CD8-positive, alpha-beta T cell (primary cell): ENCODE measurements at regions of chr19 and their contacts with region 1.

Region 1: DNA sequence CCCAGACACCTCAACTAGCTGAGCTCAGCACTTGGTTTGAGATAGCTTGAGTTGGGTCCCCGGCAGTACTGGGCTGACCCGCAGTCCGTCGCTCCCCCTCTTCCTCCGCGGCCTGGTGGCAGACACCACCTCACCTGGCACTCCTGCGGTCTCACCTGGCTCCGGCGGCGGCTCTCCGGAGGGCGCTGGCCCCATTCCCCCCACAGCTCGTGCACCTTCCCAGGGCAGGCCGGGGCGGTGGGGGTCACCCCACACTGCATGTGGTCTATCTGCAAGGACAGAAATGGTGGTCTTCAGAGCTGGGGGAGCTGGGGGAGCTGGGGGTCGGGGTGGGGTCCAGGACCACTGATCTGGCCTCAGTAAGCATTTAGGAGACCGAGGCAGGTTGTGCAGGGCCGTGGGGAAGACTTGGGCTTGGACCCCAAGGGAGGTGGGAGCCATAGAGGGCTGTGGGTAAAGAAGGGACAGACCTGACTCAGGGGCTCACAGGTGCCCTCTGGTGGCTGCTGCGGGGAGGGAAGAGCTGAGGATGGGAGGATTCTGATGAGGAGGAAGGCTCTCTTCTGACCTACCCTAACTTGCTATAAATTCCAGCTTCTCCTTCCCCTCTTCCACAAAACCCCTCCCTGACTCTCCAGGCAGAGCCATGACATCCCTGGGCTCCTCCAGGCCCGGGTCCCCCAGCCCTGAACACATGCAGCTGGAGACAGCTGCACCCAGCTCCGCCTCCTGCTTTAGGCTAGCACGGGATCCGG is 6.7 kb upstream of the PLIN4 start:
- DNase-seq: peak; percentile 41 to 75 (median 58)
- ATAC-seq: peak; percentile 77
- H3K4me3 ChIP-seq: no peak overlapping the region
- H3K4me3 Mint-ChIP-seq: no peak overlapping the region
- H3K27ac ChIP-seq: no peak overlapping the region
- H3K27ac Mint-ChIP-seq: no peak overlapping the region
- H3K4me1 ChIP-seq: no peaks in the 10 kb centered on the region
- H3K4me1 Mint-ChIP-seq: no peaks in the 10 kb centered on the region
- H3K27me3 ChIP-seq: peaks cover 0 to 2% of the 10 kb centered on the region in 2 experiments
- H3K27me3 Mint-ChIP-seq: peaks cover 3% of the 10 kb centered on the region
- CTCF ChIP-seq: peak; percentile 46

Region 2: DNA sequence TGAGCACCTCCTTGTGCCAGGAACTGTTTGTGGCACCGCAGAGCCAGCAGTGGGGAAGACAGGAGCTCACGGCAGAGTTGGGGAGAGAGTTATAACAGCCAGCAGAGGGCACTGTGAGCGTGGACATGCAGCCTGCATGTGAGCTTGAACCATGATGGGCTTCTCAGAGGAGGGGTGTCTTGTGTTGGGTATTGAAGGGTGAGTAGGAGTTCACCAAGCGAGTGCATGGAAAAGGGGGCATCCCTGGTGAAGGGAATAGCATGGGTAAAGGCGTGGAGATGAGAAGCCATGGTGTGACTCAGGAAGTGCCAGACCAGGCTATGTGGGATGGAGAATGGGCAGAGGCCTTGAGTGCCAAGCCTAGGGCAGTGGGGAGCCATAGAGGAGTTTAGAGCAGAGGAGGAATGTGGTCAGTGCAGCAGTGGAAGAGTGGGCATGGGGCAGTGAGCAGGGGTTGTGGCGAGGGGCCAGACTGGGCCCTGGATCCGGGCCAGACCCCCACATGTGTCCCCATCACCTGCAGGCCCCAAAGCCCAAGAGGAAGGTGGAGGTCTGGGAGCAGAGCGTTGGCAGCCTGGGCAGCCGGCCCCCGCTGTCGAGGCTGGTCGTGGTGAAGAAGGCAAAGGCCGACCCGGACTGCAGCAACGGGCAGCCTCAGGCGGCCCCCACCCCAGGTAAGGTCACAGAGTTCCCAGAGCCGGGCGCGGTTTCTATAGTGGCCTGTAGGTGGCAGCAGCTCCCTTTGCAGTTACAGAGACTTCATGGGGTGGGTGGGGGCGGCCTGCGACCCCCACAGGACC is 257.7 kb before region 1 on chr19:
- CTCF ChIA-PET with region 1: interaction called, 23 read pairs
- POLR2A ChIA-PET with region 1: no interaction called
- intact Hi-C with region 1: loop called in 1 of 2 experiments (anchors 2 kb)
- DNase-seq: peak; percentile 37 to 76 (median 65)
- ATAC-seq: peak; percentile 70
- H3K4me3 ChIP-seq: no peak overlapping the region
- H3K4me3 Mint-ChIP-seq: no peak overlapping the region
- H3K27ac ChIP-seq: no peak overlapping the region
- H3K27ac Mint-ChIP-seq: peak overlapping the region; percentile 23
- H3K4me1 ChIP-seq: peaks cover 15% of the 10 kb centered on the region
- H3K4me1 Mint-ChIP-seq: peaks cover 25% of the 10 kb centered on the region
- H3K27me3 ChIP-seq: no peaks in the 10 kb centered on the region
- H3K27me3 Mint-ChIP-seq: no peaks in the 10 kb centered on the region
- CTCF ChIP-seq: peak; percentile 82

Region 3: GRCh38 chr19:4534836-4535658 is 10.1 kb after region 1 on chr19 and contains the start of gene PLIN5:
- CTCF ChIA-PET with region 1: interaction called, 27 read pairs
- POLR2A ChIA-PET with region 1: no interaction called
- intact Hi-C with region 1: no loop called
- DNase-seq: peak; percentile 15 to 63 (median 50)
- ATAC-seq: peak; percentile 78
- H3K4me3 ChIP-seq: peak within 1 kb of the TSS in 1 of 2 experiments; percentile 3
- H3K4me3 Mint-ChIP-seq: peak within 1 kb of the TSS; percentile 43
- H3K27ac ChIP-seq: no peak within 1 kb of the TSS
- H3K27ac Mint-ChIP-seq: no peak within 1 kb of the TSS
- H3K4me1 ChIP-seq: peaks cover 11% of the 10 kb centered on the region
- H3K4me1 Mint-ChIP-seq: peaks cover 7% of the 10 kb centered on the region
- H3K27me3 ChIP-seq: no peaks in the 10 kb centered on the region
- H3K27me3 Mint-ChIP-seq: peaks cover 11% of the 10 kb centered on the region
- CTCF ChIP-seq: no peak
- total RNA-seq, gene PLIN5: 0.53 to 0.54 TPM